ENCODE measurements at regions of chr10 and their contacts with region 1.

Region 1: GRCh38 chr10:5752301-5752871 is 60.8 kb downstream of the GDI2 start:
- DNase-seq: no peak
- H3K4me3 ChIP-seq: 0 out of 8 replicates have a peak overlapping the region, but pooled peaks of 1 of the 4 experiments have one; percentile 12
- H3K27ac ChIP-seq: peak overlapping the region; percentile 18; the same call in 1 of the 2 replicates
- H3K4me1 ChIP-seq: peaks cover 4 to 16% (median 10%) of the 10 kb centered on the region in 4 experiments
- H3K27me3 ChIP-seq: no peaks in the 10 kb centered on the region
- CTCF ChIP-seq: no peak
- EP300 ChIP-seq: no peak
- POLR2A ChIP-seq: no peak
- RAD21 ChIP-seq: no peak

Region 2: GRCh38 chr10:5764422-5765297 is 12.3 kb after region 1 on chr10:
- CTCF ChIA-PET with region 1: interaction called, 3 read pairs
- POLR2A ChIA-PET with region 1: interaction called, 14 read pairs
- DNase-seq: no peak
- H3K4me3 ChIP-seq: no peak overlapping the region
- H3K27ac ChIP-seq: no peak overlapping the region
- H3K4me1 ChIP-seq: no peaks in the 10 kb centered on the region
- H3K27me3 ChIP-seq: no peaks in the 10 kb centered on the region
- CTCF ChIP-seq: peak in 2 of 3 experiments; percentile 11 to 33; a peak in 2 of 4 replicates
- EP300 ChIP-seq: no peak
- POLR2A ChIP-seq: peak in 1 of 2 experiments; percentile 5; a peak in 2 of 3 replicates
- RAD21 ChIP-seq: peak in 1 of 2 experiments; percentile 26; a peak in 1 of 4 replicates

Measured in H1 (cell line).